Activated CD4-positive, alpha-beta memory T cell treated with anti-CD3 and anti-CD28 coated beads for 36 hours (primary cell): ENCODE measurements at regions of chr11 and their contacts with region 1.

Region 1: DNA sequence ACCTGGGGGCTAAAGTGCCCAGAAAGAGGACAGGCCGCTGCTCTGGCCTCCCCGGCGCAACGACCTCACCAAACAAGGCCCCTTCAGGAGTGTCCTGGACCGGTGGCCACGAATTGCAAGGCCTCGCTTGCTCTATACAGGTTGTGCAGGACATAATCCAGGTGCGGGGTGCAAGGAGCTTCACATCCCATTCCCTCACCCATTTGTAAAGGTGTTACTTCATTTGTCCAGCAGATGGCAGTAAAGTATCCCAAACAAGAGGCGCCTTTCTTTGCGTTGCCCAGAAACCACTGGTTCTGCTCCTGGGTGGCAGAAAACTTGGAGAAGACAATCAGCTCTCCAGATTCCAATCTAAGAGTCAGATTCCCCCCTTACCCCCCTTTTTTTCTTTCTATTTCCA is 35.9 kb upstream of the PRDM11 start:
- DNase-seq: peak; percentile 31
- H3K4me3 Mint-ChIP-seq: no peak overlapping the region
- H3K27ac Mint-ChIP-seq: no peak overlapping the region
- H3K4me1 Mint-ChIP-seq: no peaks in the 10 kb centered on the region
- H3K27me3 Mint-ChIP-seq: peaks cover 34% of the 10 kb centered on the region

Region 2: GRCh38 chr11:44936525-44936924 is 174.0 kb before region 1 on chr11:
- CTCF ChIA-PET with region 1: interaction called, 1,143 read pairs
- POLR2A ChIA-PET with region 1: interaction called, 6 read pairs
- intact Hi-C with region 1: no loop called
- DNase-seq: peak; percentile 89
- H3K4me3 Mint-ChIP-seq: no peak overlapping the region
- H3K27ac Mint-ChIP-seq: no peak overlapping the region
- H3K4me1 Mint-ChIP-seq: no peaks in the 10 kb centered on the region
- H3K27me3 Mint-ChIP-seq: no peaks in the 10 kb centered on the region

Region 3: GRCh38 chr11:45233121-45233803 is 122.7 kb after region 1 on chr11:
- CTCF ChIA-PET with region 1: interaction called, 15 read pairs
- POLR2A ChIA-PET with region 1: no interaction called
- intact Hi-C with region 1: loop called (anchors 5 kb)
- DNase-seq: peak; percentile 76
- H3K4me3 Mint-ChIP-seq: no peak overlapping the region
- H3K27ac Mint-ChIP-seq: no peak overlapping the region
- H3K4me1 Mint-ChIP-seq: no peaks in the 10 kb centered on the region
- H3K27me3 Mint-ChIP-seq: peaks cover 10% of the 10 kb centered on the region

Region 4: DNA sequence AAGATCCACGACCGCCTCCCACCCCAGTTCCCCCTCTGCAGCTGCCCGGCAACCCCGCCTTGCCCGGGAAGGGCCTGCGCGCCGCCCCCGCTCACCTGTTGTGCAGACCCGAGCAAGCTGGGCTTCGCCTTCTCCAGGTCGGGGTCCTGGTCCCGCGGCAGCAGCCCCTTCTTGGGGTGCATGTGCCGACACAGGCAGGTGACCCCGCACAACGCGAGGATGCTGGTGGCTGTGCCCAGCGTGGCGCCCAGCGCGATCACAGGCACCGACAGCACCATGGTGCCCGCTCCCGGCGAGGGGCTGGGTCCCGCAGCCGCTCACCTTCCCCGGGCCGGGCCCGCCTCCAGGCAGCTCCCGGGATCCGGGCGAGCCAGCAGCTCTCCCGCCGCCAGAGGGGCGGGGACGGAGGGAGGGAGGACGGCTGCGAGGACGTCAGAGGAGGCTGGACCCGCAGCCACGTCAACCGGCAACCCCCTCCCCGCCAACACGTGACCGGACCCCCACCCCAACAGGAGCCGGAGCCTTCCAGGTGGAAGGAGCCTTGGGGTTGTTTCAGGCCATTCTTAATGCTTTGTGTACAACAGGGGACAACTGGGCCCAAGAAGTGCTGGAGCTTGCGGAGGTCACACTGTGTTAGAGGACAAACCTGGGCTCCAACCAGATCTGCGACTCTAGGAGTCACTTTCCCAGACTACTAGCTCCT is 175.5 kb after region 1 on chr11 and contains the start of gene SYT13:
- CTCF ChIA-PET with region 1: interaction called, 35 read pairs
- POLR2A ChIA-PET with region 1: no interaction called
- intact Hi-C with region 1: no loop called
- DNase-seq: no peak
- H3K4me3 Mint-ChIP-seq: no peak within 1 kb of the TSS
- H3K27ac Mint-ChIP-seq: no peak within 1 kb of the TSS
- H3K4me1 Mint-ChIP-seq: no peaks in the 10 kb centered on the region
- H3K27me3 Mint-ChIP-seq: peaks cover 58% of the 10 kb centered on the region
- total RNA-seq, gene SYT13: not detected

Region 5: DNA sequence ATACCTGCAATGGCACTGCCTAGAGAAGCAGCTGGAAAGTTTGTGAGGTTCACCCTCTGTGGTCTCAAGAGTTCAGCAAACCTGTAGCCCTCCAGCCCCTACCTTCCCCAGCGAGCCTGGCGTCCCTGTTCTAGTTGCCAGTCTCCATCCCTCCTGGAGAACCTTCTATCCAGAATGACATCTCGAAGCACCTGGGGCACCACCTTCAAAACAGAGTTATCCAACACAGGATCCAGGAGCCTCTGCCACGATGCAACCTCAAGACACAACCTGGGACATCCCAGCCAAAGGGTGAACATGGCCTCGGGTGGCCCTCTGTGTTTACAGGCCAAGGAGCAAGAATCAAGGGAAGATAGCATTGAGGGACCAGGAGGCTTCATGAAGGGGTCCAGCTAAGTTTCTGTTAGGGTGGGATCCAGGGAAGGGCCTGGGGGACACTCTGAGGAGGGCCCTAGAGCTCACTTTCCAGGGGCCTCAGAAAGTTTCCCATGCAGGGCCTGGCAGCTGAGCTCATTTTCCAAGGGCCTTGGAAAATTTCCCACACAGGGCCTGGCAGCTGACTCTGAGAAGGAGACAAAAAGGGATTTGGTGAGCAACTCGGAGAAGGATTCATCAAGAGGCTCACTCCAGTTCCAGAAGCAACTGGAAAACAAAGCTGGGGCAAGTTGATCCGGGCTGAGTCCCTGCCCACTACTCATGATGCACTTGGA is 212.5 kb after region 1 on chr11:
- CTCF ChIA-PET with region 1: interaction called, 117 read pairs
- POLR2A ChIA-PET with region 1: no interaction called
- intact Hi-C with region 1: no loop called
- DNase-seq: no peak
- H3K4me3 Mint-ChIP-seq: no peak overlapping the region
- H3K27ac Mint-ChIP-seq: no peak overlapping the region
- H3K4me1 Mint-ChIP-seq: no peaks in the 10 kb centered on the region
- H3K27me3 Mint-ChIP-seq: peaks cover 27% of the 10 kb centered on the region